Psoas muscle (tissue), 8 donors: ENCODE measurements at regions of chr2 and their contacts with region 1.

Region 1: DNA sequence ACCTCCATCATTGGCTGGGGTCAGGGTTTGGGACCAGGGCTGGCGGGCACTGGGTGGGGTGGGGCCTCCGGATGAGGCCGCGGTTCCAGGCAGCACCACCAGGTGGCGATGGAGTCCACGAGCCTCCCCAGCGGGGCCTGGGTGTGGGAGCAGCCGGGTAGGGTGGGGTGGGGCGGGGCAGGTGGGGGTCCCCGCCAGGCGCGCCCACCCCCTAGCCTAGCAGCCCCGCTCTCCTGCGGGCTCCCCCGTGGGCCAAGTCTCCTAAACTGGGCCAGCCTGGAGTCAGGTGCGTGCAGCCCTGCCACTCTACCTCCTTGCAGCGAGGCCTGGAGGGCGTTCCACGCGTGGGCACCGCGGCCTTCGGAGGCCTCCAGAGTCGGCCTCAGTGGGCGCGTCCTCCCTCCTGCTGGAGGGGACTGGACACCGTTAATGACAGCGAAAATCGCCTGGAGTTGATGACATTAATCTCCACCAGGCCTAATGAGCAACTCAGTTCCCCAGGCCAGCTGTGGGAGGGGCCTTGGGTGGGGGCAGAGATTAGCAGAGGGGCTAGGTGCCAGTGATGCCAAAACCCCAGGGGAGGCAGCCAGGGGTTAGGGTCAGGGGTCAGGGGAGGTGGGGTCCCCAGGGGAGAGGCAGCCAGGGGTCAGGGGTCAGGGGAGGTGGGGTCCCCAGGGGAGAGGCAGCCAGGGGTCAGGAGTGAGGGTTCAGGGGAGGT is 187.6 kb downstream of the TWIST2 start:
- DNase-seq: peak; percentile 55 to 83
- ATAC-seq: peak; percentile 79 to 95 (median 88)
- H3K4me3 ChIP-seq: no peak overlapping the region
- H3K27ac ChIP-seq: no peak overlapping the region
- H3K4me1 ChIP-seq: peaks cover 6% of the 10 kb centered on the region
- H3K27me3 ChIP-seq: peaks cover 0 to 3% (median 3%) of the 10 kb centered on the region in 3 donors
- CTCF ChIP-seq: peak; percentile 86

Region 2: GRCh38 chr2:238999291-238999741 is 36.2 kb before region 1 on chr2:
- intact Hi-C with region 1: no loop called
- DNase-seq: peak in 1 of 2 donors; percentile 34
- ATAC-seq: no peak
- H3K4me3 ChIP-seq: no peak overlapping the region
- H3K27ac ChIP-seq: no peak overlapping the region
- H3K4me1 ChIP-seq: no peaks in the 10 kb centered on the region
- H3K27me3 ChIP-seq: peaks cover 0 to 39% (median 0%) of the 10 kb centered on the region in 3 donors
- CTCF ChIP-seq: no peak

Region 3: DNA sequence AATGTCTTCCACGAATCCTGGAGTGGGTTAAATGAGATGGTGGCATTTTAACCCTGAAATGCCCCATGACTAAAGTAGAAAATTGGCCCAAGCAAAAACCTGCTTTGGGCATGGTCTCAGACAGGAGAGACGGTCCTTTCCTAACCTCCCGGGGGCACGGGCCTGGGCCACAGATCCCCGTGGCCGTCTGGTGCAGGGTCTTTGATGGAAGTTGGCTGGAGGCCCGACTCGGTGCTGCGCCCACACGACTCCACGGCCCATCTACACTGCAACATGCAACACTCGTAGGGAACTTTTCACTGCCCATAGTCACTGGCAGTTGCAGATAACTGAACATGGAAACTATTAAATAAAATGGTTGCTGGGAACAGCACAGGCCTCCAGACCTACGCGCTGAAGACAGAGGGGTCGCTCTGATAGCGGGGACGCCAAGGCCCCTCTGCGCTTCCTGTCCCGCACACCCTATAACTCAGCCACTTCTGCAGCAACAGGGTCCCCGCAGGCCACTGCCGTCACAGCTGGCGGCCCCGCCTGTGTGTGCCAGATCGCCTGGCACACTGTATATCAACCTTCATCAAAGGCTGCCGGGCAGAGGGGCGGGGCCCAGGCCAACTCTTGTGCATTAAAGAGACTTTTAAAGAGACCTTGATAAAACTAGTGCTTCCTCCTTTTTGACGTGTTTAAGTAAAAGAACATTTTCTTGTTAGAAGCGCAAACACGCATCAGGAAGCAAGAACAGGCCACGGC is 26.5 kb after region 1 on chr2:
- intact Hi-C with region 1: loop called in 1 of 2 experiments (anchors 2 kb)
- DNase-seq: peak in 1 of 2 donors; percentile 51
- ATAC-seq: no peak
- H3K4me3 ChIP-seq: no peak overlapping the region
- H3K27ac ChIP-seq: no peak overlapping the region
- H3K4me1 ChIP-seq: peaks cover 7% of the 10 kb centered on the region
- H3K27me3 ChIP-seq: no peaks in the 10 kb centered on the region
- CTCF ChIP-seq: no peak

Region 4: DNA sequence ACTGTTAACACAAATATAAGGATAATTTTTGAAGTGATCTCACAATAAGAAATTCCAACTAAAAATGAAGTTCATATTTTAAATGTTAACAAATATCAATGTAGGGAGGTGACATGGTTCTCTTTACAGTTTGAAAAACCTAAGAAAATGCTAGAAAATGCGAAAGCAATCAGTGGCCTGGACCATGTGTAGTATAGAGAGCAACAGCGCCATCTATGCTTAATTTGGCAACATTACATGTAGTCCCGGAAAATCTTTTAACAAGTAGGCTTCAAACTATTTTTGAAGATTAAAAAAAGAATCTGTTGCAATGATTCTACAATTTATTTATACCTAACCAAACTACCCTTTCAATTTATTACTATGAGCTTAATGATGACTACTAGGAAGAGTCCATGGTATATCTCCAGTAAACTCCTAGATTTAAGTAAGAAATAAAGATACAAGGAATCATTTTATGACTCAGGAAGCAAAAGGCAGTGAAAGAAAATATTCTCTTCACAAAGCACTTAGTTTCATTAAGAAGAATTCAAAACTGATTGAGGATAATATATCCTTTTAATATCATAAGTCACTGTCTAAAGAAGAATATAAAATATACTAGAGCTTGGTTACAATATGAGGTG is 956.3 kb after region 1 on chr2:
- intact Hi-C with region 1: loop called (anchors 5 to 10 kb)
- DNase-seq: no peak
- ATAC-seq: peak in 2 of 4 donors; percentile 70 to 73
- H3K4me3 ChIP-seq: no peak overlapping the region
- H3K27ac ChIP-seq: no peak overlapping the region
- H3K4me1 ChIP-seq: no peaks in the 10 kb centered on the region
- H3K27me3 ChIP-seq: no peaks in the 10 kb centered on the region
- CTCF ChIP-seq: peak; percentile 83